Right cardiac atrium (tissue), 5 donors: ENCODE measurements at regions of chr10 and their contacts with region 1.

Region 1: DNA sequence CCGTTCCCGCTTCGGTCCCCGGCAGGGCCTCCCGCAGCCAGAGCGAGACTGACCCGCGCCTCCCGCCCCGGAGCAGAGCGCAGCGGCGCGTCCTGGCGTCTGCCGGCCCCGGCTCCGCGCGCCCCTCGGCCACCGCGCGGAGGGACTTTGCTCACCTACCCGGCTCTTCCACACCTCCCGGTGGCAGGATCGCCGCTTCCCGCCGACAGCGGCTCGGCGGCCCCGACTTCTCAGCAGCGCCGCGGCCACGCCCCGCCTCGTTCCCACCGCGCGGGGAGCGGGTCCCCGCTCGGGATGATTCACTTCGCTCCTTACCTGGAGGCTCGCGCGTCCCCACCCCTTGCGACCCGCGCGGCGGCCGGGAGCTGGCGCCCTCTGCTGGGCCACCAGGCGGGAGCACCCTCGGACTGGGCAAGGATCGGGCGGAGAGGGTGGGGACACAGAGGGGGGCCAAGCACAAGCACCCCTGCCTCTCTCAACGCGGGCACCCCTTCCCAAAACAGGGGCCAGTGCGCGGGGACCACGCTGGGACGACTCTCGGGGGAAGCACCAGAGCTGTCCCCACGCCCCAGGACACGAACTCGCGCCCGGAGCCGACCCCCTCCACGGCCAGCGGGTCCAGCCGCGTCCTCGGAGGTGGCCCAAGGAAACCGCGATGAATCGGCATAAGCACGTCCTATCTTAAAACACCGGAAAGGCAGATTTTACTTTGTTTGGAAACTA is 101.0 kb upstream of the SVIL start:
- DNase-seq: peak; percentile 84 to 95 (median 93)
- ATAC-seq: peak; percentile 91
- H3K4me3 ChIP-seq: peak overlapping the region; percentile 81
- H3K27ac ChIP-seq: peak overlapping the region; percentile 72
- H3K4me1 ChIP-seq: peaks cover 2% of the 10 kb centered on the region
- H3K27me3 ChIP-seq: no peaks in the 10 kb centered on the region

Region 2: GRCh38 chr10:29535012-29535777 is 200.6 kb before region 1 on chr10:
- intact Hi-C with region 1: loop called in 1 of 4 experiments (anchors 10 kb)
- DNase-seq: peak; percentile 66 to 81 (median 80)
- ATAC-seq: peak; percentile 78 to 83
- H3K4me3 ChIP-seq: peak overlapping the region; percentile 13
- H3K27ac ChIP-seq: peak overlapping the region; percentile 91
- H3K4me1 ChIP-seq: peaks cover 3% of the 10 kb centered on the region
- H3K27me3 ChIP-seq: no peaks in the 10 kb centered on the region

Region 3: DNA sequence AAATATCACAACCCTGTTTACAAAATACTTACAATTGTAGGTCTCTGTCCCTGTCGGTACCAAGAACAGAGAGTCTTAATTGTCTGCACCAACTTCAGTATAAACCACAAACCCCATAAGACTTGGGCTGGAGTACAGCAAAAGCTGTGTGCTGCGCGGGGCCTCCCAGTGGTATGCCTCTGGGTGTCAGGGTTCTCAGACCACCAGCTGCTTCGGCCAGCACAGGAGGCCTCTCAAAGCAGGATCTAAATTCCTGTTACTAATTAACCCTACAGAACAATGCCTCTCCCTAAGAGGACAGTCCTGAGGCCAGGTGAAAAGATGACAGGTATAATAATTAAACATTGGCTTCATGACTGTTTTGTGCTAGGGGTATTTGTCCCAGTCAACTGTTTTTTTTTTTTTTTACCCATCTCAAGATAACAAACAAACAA is 100.0 kb before region 1 on chr10:
- intact Hi-C with region 1: loop called in 2 of 4 experiments (anchors 10 kb)
- DNase-seq: no peak
- ATAC-seq: peak; percentile 38 to 47
- H3K4me3 ChIP-seq: peak overlapping the region; percentile 26
- H3K27ac ChIP-seq: peak overlapping the region; percentile 99
- H3K4me1 ChIP-seq: peaks cover 5% of the 10 kb centered on the region
- H3K27me3 ChIP-seq: no peaks in the 10 kb centered on the region

Region 4: DNA sequence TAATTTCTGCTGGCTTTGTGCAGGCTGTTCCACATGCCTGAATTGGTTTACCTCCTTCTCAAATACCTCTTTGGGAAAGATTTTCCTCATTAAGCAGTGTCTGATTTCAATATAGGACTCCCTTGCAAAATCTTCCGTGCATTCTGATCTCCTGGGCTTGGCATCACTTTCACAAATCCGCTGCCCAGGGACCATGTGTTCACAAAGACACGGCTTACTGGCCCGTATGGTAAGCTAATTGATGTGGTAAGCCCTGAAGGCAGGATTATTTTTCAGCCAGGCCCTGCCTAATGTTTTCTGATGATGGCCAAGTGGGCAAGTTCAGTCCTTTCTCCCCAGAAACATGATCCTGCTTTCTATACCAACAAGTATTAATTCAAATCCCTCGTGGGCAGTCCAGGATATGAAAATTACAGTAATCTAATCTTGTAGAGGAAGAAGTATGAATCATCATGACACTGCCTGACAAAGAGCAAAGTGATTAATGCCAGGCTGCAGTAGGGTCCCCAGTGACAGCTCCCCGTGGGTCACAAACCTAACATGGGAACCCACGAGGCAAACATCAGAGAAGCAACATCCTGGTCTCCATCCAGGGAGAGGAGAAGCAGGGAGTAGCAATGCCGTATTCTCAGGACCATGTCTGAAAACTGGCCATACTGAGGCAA is 89.4 kb before region 1 on chr10:
- intact Hi-C with region 1: loop called in 1 of 4 experiments (anchors 10 kb)
- DNase-seq: peak in 1 of 3 donors; percentile 33
- ATAC-seq: peak; percentile 4 to 34
- H3K4me3 ChIP-seq: no peak overlapping the region
- H3K27ac ChIP-seq: peak overlapping the region; percentile 57
- H3K4me1 ChIP-seq: peaks cover 16% of the 10 kb centered on the region
- H3K27me3 ChIP-seq: no peaks in the 10 kb centered on the region

Region 5: GRCh38 chr10:29841724-29842649 is 106.2 kb after region 1 on chr10:
- intact Hi-C with region 1: loop called in 2 of 4 experiments (anchors 10 kb)
- DNase-seq: peak; percentile 60 to 84 (median 74)
- ATAC-seq: peak; percentile 87
- H3K4me3 ChIP-seq: no peak overlapping the region
- H3K27ac ChIP-seq: peak overlapping the region; percentile 98
- H3K4me1 ChIP-seq: peaks cover 4% of the 10 kb centered on the region
- H3K27me3 ChIP-seq: no peaks in the 10 kb centered on the region

Region 6: GRCh38 chr10:29857843-29858701 is 122.3 kb after region 1 on chr10:
- intact Hi-C with region 1: loop called in 2 of 4 experiments (anchors 5 kb)
- DNase-seq: peak; percentile 63 to 88 (median 81)
- ATAC-seq: peak; percentile 84 to 90
- H3K4me3 ChIP-seq: no peak overlapping the region
- H3K27ac ChIP-seq: no peak overlapping the region
- H3K4me1 ChIP-seq: no peaks in the 10 kb centered on the region
- H3K27me3 ChIP-seq: no peaks in the 10 kb centered on the region